ENCODE measurements at regions of chr3 and their contacts with region 1.

Region 1: DNA sequence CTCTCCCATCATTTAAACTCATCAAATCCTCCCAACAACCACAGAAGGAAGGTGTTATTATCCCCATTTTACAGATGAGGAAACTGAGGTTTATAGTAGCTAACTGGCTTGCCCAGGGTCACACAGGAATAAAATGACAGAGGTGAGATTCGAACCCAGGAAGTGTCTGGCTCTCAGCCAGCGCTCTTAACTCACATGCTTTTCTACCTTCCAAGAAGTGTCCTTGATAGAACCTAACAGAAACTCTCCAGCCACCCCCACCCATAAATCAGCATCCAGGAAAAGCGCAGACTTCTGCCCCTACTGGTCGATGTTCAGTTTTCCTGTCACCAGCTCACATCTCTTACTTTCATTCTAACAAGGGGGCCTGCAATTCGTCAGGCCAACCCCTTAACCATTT is 51.7 kb downstream of the SPATA12 start:
- DNase-seq: no peak
- H3K4me3 ChIP-seq: no peak overlapping the region
- H3K27me3 ChIP-seq: no peaks in the 10 kb centered on the region
- CTCF ChIP-seq: no peak

Region 2: DNA sequence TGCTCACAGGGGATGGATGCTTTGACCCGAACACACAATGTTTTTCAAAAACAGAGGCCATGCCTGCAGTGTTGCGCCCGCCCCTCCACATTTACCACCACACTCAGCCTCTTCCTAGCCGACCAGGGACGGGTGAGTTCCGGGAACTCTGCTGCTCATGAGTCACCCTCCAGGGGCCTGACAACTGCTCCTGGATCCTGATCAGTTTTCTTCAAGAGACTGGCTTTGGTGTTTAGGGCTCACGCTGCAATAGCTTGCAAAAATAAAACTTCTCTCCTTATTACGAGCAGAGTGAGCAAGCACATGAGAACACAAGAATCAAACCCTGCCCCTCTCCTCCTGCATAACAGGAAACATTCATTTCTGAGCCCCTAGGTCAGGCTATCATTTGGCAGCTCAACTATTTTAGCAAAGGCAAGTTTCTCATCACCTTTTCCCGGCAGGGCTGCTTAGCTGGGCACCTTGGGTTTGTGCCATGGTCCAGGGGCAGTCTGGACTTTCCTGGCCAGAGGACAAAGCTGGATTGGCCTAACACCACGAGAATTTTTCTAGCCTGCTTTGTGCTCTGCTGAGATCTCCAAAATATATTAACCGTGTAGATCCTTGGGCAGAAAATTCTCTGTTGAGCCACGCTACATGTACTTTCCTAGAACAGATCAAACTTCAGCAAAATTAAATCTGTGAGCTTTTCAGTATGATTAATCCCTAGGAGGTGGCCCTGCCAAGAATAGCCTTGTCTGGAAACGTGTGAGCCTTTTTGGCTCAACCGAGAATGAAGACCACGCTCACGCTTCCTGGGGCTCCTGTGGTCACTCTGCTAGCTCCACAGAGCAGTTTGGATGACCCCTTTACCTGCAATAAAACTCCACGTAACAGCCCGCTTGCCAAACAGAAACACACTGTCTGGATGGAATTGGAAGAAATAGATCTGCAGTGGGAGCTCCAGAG is 104.4 kb before region 1 on chr3:
- CTCF ChIA-PET with region 1: interaction called, 3 read pairs
- POLR2A ChIA-PET with region 1: interaction called, 11 read pairs
- DNase-seq: no peak
- H3K4me3 ChIP-seq: no peak overlapping the region
- H3K27me3 ChIP-seq: no peaks in the 10 kb centered on the region; the same call in 1 of the 2 replicates
- CTCF ChIP-seq: no peak